Posterior cingulate gyrus (tissue), 11 donors: ENCODE measurements at regions of chr7 and their contacts with region 1.

Region 1: GRCh38 chr7:98434095-98434494 is 33.2 kb upstream of the BAIAP2L1 start:
- DNase-seq: no peak

Region 2: GRCh38 chr7:98745722-98746318 is 311.7 kb after region 1 on chr7:
- intact Hi-C with region 1: loop called (anchors 10 kb)
- DNase-seq: peak; percentile 15 to 93 (median 66)

Region 3: DNA sequence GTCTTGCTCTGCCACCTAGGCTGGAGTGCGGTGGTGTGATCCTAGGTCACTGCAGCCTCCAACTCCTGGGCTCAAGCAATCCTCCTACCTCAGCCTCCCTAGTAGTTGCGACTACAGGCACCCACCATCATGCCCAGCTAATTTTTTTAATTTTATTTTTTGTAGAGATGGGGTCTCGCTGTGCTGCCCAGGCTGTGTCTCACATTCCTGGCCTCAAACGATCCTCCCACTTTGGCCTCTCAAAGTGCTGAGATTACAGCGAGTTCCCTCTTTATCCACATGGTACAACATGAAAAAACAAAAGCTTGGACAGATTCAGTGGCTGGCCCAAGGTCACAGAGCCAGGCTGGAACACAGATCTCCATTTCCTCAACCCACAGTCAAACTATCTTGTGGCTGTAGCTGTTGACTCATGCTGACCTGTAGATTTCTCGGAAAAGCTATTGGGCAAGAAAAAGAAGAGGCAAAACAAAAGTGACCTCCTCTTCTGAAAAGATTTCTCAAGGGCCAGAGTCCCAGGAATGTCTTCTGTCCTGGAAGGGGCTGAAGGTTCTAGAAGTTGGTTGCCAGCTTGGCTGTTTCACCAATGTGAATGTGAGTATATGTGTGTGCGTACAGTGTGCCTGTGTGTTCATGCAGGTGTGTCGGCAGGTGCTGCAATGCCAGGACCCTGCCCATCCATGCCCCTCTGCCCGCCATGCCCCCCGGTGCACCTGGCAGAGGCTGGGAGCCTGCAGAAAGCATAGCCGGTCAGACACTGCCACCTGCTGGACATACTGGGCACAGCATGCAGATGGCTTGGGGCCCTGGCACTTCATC is 407.3 kb after region 1 on chr7:
- intact Hi-C with region 1: loop called (anchors 1 kb)
- DNase-seq: peak; percentile 54 to 96 (median 80)